HEK293T (cell line): ENCODE measurements at regions of chr10 and their contacts with region 1.

Region 1: GRCh38 chr10:36779234-36779846 is 346.1 kb upstream of the ANKRD30A start:
- DNase-seq: peak; percentile 50

Region 2: DNA sequence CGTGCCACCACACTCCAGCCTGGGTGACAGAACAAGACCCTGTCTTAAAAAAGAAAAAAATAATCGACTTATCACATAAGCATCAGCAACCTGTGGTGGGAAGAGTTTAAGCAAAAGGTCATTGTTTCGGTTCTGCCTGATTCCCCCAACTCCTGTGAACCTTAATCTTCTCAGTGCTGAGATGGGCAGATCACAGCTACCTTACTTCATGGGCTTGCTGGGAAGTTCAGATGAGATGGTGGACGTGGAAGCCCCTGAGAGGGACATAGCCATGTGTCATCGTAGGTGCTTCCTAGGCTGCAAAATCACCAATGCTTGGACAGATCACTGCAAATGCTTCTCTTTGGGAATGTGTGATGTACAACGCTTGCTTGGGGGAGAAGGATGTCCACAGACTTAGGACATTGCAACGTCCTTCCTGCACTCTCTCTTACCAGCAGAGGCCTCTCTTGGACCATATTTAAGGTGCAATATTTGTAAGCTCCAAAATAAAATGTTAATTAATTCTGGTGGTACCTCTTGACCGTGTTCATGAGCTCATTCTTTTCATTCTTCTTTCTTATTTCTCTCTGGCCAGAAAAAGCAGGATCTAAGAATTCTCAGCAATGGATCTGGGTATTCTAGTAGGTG is 1165.6 kb before region 1 on chr10:
- CTCF ChIA-PET with region 1: interaction called, 22 read pairs
- POLR2A ChIA-PET with region 1: no interaction called
- DNase-seq: peak; percentile 15

Region 3: GRCh38 chr10:35635576-35635975 is 1143.8 kb before region 1 on chr10:
- CTCF ChIA-PET with region 1: interaction called, 28 read pairs
- POLR2A ChIA-PET with region 1: no interaction called
- DNase-seq: peak; percentile 39

Region 4: DNA sequence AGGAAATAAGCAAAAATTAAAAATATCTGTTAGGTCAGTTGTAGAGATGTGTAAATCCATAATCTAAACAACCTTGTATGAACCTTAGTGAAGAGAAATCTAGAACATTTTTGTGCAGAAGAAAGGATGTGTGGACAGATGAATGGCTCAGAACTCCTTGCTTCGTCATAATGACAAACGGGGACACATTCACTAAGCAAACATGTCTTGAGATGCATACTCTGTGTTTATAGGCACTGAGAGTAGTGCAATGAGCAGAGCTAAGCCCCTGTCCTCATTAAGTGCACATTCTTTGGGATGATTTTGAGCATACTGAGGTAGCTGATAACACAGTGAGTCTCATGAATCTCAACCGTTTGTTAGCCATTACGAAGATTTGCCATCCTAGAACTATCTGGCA is 14.5 kb before region 1 on chr10:
- CTCF ChIA-PET with region 1: no interaction called
- POLR2A ChIA-PET with region 1: no interaction called
- DNase-seq: no peak